Motor neuron (in vitro differentiated cells): ENCODE measurements at regions of chr4 and their contacts with region 1.

Region 1: GRCh38 chr4:145061318-145061920 is 36.6 kb downstream of the ANAPC10 start:
- ATAC-seq: peak in 4 of 8 experiments; percentile 21 to 72 (median 57)
- H3K4me3 ChIP-seq: no peak overlapping the region
- H3K27ac ChIP-seq: no peak overlapping the region
- H3K4me1 ChIP-seq: no peaks in the 10 kb centered on the region

Region 2: DNA sequence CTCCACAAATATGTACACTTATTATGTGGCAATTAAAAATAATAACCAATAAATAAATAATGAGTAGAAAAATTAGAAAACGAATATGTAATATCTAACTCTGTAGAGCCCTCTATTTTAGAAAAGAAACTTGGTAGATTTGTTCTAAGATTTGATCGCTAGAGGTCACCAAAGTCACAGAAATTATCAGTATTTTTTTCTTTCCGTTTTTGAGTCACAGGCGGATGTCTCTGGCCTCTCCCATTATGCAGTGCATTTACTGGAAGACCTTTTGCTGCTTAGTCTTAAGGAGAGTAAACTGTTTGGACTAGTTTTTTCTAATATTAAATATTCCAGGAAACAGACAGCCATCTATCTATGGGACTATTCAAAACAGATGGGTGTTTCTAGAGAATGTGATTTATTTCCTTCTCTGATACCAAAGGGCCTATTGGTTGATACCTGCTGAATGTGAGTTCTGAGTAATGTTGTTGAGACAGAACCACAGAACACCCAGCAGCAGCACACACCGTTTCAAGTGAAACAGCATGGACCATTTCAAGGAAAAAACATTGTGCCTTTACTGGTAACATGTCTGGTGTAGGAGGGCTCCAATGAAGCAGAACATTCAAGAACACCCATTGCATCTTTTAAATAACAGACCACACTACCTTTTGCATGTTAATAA is 886.9 kb before region 1 on chr4:
- in situ Hi-C with region 1: loop called in 4 of 9 experiments (anchors 10 to 25 kb)
- ATAC-seq: peak; percentile 64 to 97 (median 74)
- H3K4me3 ChIP-seq: no peak overlapping the region
- H3K27ac ChIP-seq: no peak overlapping the region
- H3K4me1 ChIP-seq: no peaks in the 10 kb centered on the region

Region 3: GRCh38 chr4:144575181-144575580 is 486.2 kb before region 1 on chr4:
- in situ Hi-C with region 1: loop called in 1 of 9 experiments (anchors 25 kb)
- ATAC-seq: peak in 3 of 8 experiments; percentile 26 to 67 (median 48)
- H3K4me3 ChIP-seq: no peak overlapping the region
- H3K27ac ChIP-seq: no peak overlapping the region
- H3K4me1 ChIP-seq: no peaks in the 10 kb centered on the region

Region 4: DNA sequence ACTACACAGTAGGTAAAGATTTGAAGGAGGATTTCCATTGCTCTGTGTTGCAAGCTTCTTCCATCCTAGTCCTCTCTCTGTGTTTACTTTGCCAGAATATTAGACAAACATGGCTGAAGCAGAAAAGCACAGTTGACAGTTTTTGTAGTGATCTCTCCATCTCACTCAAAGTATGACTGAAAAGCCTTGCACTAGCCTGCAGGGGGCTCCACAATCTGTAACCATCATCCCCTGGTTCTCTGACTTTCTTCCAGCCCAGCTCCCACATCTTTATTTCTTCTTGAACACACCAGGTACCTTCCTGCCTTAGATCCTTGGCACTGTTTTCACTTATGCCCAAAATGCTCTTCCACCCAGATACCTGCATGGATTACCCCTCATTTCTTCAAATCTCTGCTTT is 449.6 kb before region 1 on chr4:
- in situ Hi-C with region 1: loop called in 1 of 9 experiments (anchors 25 kb)
- ATAC-seq: peak in 3 of 8 experiments; percentile 53 to 67 (median 60)
- H3K4me3 ChIP-seq: no peak overlapping the region
- H3K27ac ChIP-seq: no peak overlapping the region
- H3K4me1 ChIP-seq: no peaks in the 10 kb centered on the region

Region 5: GRCh38 chr4:144787365-144788258 is 273.8 kb before region 1 on chr4:
- in situ Hi-C with region 1: loop called in 1 of 9 experiments (anchors 25 kb)
- ATAC-seq: peak in 2 of 8 experiments; percentile 40 to 50
- H3K4me3 ChIP-seq: no peak overlapping the region
- H3K27ac ChIP-seq: no peak overlapping the region
- H3K4me1 ChIP-seq: no peaks in the 10 kb centered on the region

Region 6: DNA sequence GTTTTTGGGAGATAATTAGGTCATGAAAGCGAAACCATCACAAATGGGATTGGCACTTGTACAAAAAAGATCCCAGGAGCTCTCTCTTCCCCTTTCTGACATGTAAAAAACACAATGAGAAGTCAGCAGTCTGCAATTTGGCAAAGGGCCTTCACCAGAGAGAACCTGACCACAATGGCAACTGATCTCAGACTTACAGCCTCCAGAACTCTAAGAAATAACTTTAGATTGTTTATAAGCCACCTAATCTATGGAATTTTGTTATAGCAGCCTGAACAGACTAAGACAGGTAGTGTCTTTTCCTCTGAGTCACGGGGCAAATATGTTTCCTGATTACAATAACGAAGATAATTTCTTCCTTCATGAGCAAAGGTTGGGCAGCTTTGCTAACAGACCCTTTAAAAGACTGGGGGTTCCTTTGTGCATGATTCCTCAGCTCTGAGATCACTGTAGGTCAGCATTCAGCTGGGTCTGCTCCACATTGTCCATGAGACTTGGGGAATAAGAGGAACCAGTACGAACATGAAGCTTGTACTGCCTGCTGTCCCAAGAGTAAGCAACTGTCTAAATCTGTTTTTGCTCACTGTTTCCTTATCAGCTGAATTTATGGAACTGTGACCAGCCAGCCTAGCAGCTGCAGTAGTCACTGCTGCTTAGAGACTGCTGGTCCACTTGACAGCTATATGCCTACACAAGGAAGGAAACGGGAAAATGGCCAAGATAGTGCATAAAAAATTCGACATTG is 155.1 kb before region 1 on chr4:
- in situ Hi-C with region 1: no loop called
- ATAC-seq: no peak
- H3K4me3 ChIP-seq: no peak overlapping the region
- H3K27ac ChIP-seq: no peak overlapping the region
- H3K4me1 ChIP-seq: peaks cover 0 to 6% of the 10 kb centered on the region in 2 donors